ENCODE measurements at regions of chr1 and their contacts with region 1.

Region 1: DNA sequence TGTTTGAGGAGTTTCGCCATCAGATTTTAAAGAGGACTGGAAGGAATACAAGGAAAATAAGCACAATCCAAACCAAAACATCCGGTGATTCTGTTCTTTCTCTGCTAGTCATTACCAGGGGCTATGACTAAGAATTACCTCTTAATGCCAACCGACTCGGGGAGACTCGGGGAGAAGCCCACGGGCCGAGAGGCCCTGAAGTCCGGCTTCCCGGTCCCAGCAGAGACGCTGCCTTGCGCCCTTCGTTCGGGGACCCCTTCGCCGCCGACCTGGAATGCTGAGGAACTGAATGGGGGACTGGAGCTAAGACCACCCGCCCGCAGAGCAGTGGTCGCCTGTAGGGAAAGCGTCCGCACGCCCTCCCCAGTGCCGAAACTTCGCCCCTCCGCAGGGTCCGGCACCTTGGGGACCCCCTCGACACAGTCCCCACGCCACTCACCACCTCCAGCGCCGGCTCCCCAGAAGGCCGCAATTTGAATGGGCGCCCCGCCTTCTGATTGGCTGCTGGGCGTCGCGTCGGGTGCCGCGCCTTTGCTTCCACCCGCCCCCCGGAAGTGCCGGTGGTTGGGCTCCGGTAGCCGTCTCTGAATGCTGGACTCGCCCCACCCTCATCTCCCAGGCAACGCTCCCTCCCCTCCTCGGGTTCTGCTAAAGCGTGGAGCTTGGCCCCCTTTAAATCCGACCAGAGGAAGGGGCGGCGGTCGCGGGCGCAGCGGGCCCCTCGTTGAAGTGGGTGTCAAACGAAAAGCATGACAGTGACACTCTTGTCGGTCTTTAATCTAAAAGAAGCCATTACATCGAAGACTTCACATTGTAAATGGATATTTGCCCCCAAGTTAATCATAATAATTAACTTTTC is at the start of gene KIF14:
- DNase-seq: peak; percentile 61
- H3K4me3 ChIP-seq: peak within 1 kb of the TSS; percentile 90
- H3K27ac ChIP-seq: peak within 1 kb of the TSS; percentile 83
- H3K27me3 ChIP-seq: no peaks in the 10 kb centered on the region
- CTCF ChIP-seq: no peak
- polyA plus RNA-seq, gene KIF14: 1.5 and 2.9 TPM in 2 replicates

Region 2: DNA sequence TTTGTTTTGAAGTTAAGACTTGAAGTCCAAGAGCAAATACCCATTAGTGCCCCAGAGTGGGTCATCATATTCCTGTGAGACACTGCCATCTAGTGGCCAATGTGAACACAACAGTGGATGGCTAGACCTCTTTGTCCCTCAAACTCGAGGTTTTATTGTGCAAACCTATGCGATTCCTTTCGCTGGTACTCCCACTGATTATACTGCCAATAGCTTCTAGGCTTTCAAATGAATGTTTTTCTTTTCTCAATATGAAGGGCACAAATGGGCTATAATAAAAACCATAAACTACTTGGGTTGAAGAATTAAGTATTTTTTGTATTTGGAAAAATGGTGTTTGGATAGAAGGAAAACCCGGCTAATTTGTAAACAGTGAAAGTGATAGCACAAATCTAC is 110.3 kb before region 1 on chr1:
- CTCF ChIA-PET with region 1: no interaction called
- POLR2A ChIA-PET with region 1: no interaction called
- DNase-seq: peak; percentile 74
- H3K4me3 ChIP-seq: no peak overlapping the region
- H3K27ac ChIP-seq: no peak overlapping the region
- H3K27me3 ChIP-seq: no peaks in the 10 kb centered on the region
- CTCF ChIP-seq: peak; percentile 89

Region 3: GRCh38 chr1:200732438-200732837 is 111.9 kb after region 1 on chr1:
- CTCF ChIA-PET with region 1: interaction called, 10 read pairs
- POLR2A ChIA-PET with region 1: no interaction called
- DNase-seq: no peak
- H3K4me3 ChIP-seq: no peak overlapping the region
- H3K27ac ChIP-seq: no peak overlapping the region
- H3K27me3 ChIP-seq: no peaks in the 10 kb centered on the region
- CTCF ChIP-seq: no peak

Region 4: GRCh38 chr1:200774735-200775444 is 154.4 kb after region 1 on chr1:
- CTCF ChIA-PET with region 1: interaction called, 10 read pairs
- POLR2A ChIA-PET with region 1: no interaction called
- DNase-seq: no peak
- H3K4me3 ChIP-seq: no peak overlapping the region
- H3K27ac ChIP-seq: no peak overlapping the region
- H3K27me3 ChIP-seq: no peaks in the 10 kb centered on the region
- CTCF ChIP-seq: no peak

Region 5: DNA sequence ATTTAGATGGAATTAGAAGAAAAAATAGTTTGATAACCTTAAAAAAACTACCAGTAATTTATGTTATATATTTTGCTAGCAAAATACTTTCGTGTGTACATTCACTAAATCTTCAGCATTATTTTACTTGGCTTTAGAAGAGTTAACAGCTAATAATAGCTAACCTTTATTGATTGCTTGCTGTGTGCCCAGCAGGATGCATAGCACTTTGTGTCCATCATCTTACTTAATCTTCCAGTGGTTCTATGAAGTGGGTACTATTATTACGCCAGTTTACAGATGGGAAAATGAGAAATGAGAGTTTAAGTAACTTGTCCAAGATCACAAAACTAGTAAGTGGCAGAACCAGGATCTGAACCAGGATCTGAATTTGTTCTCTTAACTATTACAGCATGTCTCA is 210.6 kb after region 1 on chr1:
- CTCF ChIA-PET with region 1: interaction called, 89 read pairs
- POLR2A ChIA-PET with region 1: no interaction called
- DNase-seq: no peak
- H3K4me3 ChIP-seq: no peak overlapping the region
- H3K27ac ChIP-seq: no peak overlapping the region
- H3K27me3 ChIP-seq: no peaks in the 10 kb centered on the region
- CTCF ChIP-seq: no peak

Region 6: DNA sequence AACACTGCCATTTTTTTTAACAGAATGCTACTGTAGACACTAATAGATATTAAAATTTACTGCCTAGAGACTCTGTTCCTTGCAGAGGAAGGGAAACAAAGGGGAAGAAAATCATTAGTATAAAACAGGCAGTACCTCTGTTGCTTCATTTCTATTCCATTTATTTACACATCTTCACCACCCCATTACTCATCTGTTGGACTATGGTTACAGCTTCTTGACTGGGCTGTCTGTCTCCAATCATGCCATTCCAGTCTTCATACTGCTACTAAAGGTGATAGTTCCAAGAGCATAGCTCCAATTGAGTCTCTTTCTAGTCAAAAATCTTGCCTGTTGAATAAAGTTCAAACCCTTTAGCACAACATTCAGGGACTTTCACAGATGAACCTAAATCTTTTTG is 230.1 kb after region 1 on chr1:
- CTCF ChIA-PET with region 1: interaction called, 13 read pairs
- POLR2A ChIA-PET with region 1: no interaction called
- DNase-seq: no peak
- H3K4me3 ChIP-seq: no peak overlapping the region
- H3K27ac ChIP-seq: no peak overlapping the region
- H3K27me3 ChIP-seq: no peaks in the 10 kb centered on the region
- CTCF ChIP-seq: no peak

Measured in AG04450 (cell line).